ENCODE measurements at regions of chr10 and their contacts with region 1.

Region 1: DNA sequence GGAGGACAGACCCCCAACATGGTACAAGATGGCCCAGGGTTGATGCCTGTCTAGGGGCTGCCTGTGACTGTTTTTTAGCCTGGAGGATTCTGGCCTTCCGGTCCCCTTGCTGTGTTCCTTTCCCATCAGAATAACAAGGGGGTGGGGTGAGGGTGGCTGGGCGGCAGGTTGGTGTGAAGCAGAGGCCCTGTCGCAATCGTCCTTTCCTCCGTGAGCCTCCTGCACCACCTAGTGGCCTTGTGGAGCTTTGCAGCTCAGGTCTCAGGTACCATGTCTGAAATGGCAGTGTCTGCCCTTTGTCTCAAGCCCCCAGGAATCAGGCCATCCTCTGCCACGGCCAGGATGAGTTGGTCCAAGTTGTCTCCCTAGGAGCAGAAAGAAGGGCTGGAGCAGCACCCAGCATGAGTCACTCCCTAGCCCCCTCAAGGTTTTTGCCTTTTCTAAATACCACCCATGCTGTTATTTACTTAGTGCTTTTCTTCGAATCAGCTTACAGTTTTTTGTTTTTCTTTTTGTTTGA is 24.2 kb downstream of the TACR2 start:
- DNase-seq: peak; percentile 51
- ATAC-seq: peak; percentile 100
- H3K4me3 ChIP-seq: no peak overlapping the region
- H3K27ac ChIP-seq: no peak overlapping the region
- H3K4me1 ChIP-seq: no peaks in the 10 kb centered on the region
- H3K27me3 ChIP-seq: no peaks in the 10 kb centered on the region
- CTCF ChIP-seq: peak; percentile 96 to 99 (median 98); a peak in 5 of 6 replicates
- EP300 ChIP-seq: no peak
- POLR2A ChIP-seq: no peak
- RAD21 ChIP-seq: peak; percentile 97

Region 2: DNA sequence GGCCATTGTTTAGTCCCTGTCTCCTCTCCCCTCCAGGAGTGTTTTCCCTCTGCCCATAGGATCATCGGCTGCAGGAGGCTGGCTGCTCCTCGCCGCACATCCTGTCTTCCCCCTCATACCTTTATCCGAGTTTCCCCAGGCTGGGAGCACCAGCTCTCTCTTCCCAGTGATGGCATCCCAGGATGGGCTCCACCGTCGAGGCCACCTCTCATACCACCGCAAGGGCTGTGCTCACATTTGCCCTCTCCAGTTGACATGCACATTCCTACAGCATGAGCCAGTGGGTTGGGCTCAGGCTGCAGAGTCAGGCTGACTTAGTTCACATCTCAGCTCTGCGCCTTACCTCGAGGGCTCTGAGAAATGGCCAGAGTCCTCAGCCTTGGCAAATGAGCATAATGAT is 160.3 kb before region 1 on chr10:
- CTCF ChIA-PET with region 1: interaction called, 126 read pairs
- POLR2A ChIA-PET with region 1: no interaction called
- RAD21 ChIA-PET with region 1: interaction called, 49 read pairs
- SMC1A ChIA-PET with region 1: interaction called, 63 read pairs
- in situ Hi-C with region 1: no loop called
- intact Hi-C with region 1: loop called (anchors 1 kb)
- DNase-seq: no peak
- ATAC-seq: no peak
- H3K4me3 ChIP-seq: no peak overlapping the region
- H3K27ac ChIP-seq: no peak overlapping the region
- H3K4me1 ChIP-seq: peaks cover 21% of the 10 kb centered on the region
- H3K27me3 ChIP-seq: no peaks in the 10 kb centered on the region
- CTCF ChIP-seq: no peak
- EP300 ChIP-seq: no peak
- POLR2A ChIP-seq: no peak
- RAD21 ChIP-seq: no peak

Region 3: DNA sequence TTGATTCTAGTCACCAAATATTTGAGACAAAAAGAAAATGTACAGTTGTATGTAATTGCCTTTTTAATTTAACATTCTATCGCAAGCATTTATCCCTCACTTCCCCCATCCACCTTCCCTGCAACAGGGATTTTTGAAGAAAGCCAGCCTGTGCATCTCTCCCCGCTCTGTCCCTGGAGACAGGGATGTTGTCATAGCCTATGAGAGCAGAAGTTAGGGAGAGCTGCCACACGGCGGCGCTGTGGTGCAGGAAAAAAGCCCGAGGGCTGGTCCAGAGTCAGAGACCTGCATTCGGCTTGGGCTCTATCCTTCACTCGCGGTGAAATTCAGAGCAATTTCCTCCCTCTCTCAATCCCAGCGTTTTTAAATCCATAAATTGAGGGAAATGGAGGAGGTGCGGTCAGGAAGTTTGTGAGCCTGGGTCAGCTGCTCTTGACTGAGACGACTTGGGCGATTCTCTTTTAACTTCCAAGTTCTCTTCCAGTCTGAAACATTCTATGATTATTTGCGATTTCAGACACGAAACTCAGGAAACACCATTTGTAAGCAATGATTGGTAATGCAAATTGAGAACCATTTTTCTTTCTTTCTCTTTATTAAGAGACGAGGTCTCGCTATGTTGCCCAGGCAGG is 154.9 kb before region 1 on chr10:
- CTCF ChIA-PET with region 1: interaction called, 126 read pairs
- POLR2A ChIA-PET with region 1: interaction called, 3 read pairs
- RAD21 ChIA-PET with region 1: interaction called, 49 read pairs
- SMC1A ChIA-PET with region 1: interaction called, 63 read pairs
- in situ Hi-C with region 1: no loop called
- intact Hi-C with region 1: loop called (anchors 1 kb)
- DNase-seq: no peak
- ATAC-seq: peak; percentile 100
- H3K4me3 ChIP-seq: no peak overlapping the region
- H3K27ac ChIP-seq: no peak overlapping the region
- H3K4me1 ChIP-seq: no peaks in the 10 kb centered on the region
- H3K27me3 ChIP-seq: no peaks in the 10 kb centered on the region
- CTCF ChIP-seq: peak; percentile 85 to 98 (median 93)
- EP300 ChIP-seq: no peak
- POLR2A ChIP-seq: no peak
- RAD21 ChIP-seq: peak; percentile 94

Region 4: GRCh38 chr10:69242852-69243212 is 149.7 kb before region 1 on chr10:
- CTCF ChIA-PET with region 1: interaction called, 126 read pairs
- POLR2A ChIA-PET with region 1: interaction called, 3 read pairs
- RAD21 ChIA-PET with region 1: interaction called, 49 read pairs
- SMC1A ChIA-PET with region 1: interaction called, 63 read pairs
- in situ Hi-C with region 1: no loop called
- intact Hi-C with region 1: no loop called
- DNase-seq: no peak
- ATAC-seq: no peak
- H3K4me3 ChIP-seq: no peak overlapping the region
- H3K27ac ChIP-seq: no peak overlapping the region
- H3K4me1 ChIP-seq: no peaks in the 10 kb centered on the region
- H3K27me3 ChIP-seq: no peaks in the 10 kb centered on the region
- CTCF ChIP-seq: no peak
- EP300 ChIP-seq: no peak
- POLR2A ChIP-seq: no peak
- RAD21 ChIP-seq: no peak